HepG2 (cell line): ENCODE measurements at regions of chr7 and their contacts with region 1.

Region 1: GRCh38 chr7:22782616-22783232 is 39.9 kb downstream of the TOMM7 start:
- DNase-seq: peak; percentile 44
- ATAC-seq: peak; percentile 30
- H3K4me3 ChIP-seq: no peak overlapping the region
- H3K27ac ChIP-seq: no peak overlapping the region
- H3K4me1 ChIP-seq: peaks cover 55% of the 10 kb centered on the region
- H3K27me3 ChIP-seq: no peaks in the 10 kb centered on the region
- CTCF ChIP-seq: peak; percentile 68
- EP300 ChIP-seq: no peak
- POLR2A ChIP-seq: no peak
- RAD21 ChIP-seq: peak; percentile 50; the same call in 1 of the 2 replicates

Region 2: DNA sequence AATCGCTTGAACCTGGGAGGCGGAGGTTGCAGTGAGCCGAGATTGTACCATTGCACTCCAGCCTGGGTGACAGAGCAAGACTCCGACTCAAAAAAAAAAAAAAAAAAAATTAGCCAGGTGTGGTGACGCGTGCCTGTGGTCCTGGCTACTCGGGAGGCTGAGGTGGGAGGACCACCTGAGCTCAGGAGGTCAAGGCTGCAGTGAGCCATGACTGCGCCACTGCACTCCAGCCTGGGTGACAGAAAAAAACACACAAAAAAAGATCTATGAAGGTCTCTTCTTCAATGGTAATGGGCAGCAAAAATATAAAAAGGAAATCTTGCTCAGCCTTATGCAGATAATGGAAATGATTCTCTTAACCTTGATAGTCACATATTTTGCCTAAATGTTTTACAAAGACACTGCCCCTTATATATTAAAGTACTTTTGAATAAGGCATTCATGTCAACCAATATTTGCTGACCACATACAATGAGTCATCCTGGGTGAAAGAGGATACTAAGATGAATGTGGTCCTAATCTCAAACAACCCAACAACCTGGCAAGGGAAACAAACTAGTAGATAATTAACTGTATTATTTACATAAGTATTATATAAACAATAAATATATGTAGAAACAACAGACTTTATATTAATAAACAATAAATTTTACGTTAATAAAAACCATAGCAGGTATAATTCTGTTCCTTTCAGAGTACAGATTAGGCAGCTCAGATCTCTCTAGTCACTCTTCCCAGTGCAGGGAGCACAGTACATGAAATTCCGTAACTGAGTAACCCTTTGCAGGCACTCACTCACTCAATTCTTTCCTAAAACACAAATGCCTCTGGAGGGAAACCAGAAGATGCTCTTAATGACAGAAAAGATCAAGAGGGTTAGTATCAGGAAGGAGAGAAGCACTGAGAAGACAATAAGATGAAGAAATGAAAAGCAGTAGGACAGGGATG is 31.8 kb after region 1 on chr7:
- CTCF ChIA-PET with region 1: no interaction called
- POLR2A ChIA-PET with region 1: interaction called, 5 read pairs
- in situ Hi-C with region 1: no loop called
- intact Hi-C with region 1: loop called (anchors 2 kb)
- DNase-seq: peak; percentile 84
- ATAC-seq: peak; percentile 92
- H3K4me3 ChIP-seq: no peak overlapping the region
- H3K27ac ChIP-seq: peak overlapping the region; percentile 1
- H3K4me1 ChIP-seq: peaks cover 40% of the 10 kb centered on the region
- H3K27me3 ChIP-seq: no peaks in the 10 kb centered on the region
- CTCF ChIP-seq: no peak
- EP300 ChIP-seq: peak in 1 of 2 experiments; percentile 59; a peak in 1 of 4 replicates
- POLR2A ChIP-seq: no peak
- RAD21 ChIP-seq: no peak

Region 3: DNA sequence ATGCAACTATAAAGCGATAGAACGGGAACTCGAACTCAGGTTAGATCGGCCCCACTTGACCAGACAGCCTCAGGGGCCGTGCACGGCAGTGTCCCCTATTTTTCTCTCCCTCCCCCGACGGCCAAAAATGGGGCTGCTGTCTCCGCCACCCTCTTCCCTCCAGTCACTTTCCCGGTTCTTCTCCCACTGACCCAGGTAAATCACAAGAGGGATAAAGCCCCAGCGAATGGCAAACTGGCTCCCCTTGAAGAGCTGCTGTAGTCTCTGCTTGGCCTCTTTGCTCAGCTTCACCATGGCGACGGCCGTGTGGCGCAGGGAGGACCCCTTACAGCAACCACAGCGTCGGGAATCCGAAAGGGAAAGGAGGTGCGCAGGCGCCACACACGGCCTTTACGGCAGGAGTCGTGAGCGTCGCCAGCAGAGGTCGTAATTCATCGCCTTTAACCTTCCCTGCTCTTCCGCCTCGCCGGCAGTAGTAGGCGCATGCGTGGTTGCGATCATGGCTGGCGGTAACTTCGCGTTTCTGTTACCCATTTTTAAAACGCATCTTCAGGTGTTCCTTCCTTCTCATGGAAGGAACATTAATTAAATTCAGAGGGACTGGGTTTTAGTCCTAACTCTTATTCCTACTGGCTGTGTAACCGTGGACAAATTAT is 39.9 kb after region 1 on chr7 and contains the start of gene TOMM7:
- CTCF ChIA-PET with region 1: no interaction called
- POLR2A ChIA-PET with region 1: interaction called, 13 read pairs
- in situ Hi-C with region 1: no loop called
- intact Hi-C with region 1: loop called (anchors 1 kb)
- DNase-seq: peak; percentile 93
- ATAC-seq: peak; percentile 99
- H3K4me3 ChIP-seq: peak within 1 kb of the TSS; percentile 70 to 95 (median 90)
- H3K27ac ChIP-seq: peak within 1 kb of the TSS; percentile 77
- H3K4me1 ChIP-seq: peaks cover 37% of the 10 kb centered on the region
- H3K27me3 ChIP-seq: no peaks in the 10 kb centered on the region; a peak in 1 of 5 replicates
- CTCF ChIP-seq: peak; percentile 89
- EP300 ChIP-seq: 0 out of 4 replicates have a peak, but pooled peaks of 1 of the 2 experiments have one; percentile 21
- POLR2A ChIP-seq: peak; percentile 73 to 80
- RAD21 ChIP-seq: no peak
- total RNA-seq, gene TOMM7: 251 and 352 TPM in 2 replicates

Region 4: DNA sequence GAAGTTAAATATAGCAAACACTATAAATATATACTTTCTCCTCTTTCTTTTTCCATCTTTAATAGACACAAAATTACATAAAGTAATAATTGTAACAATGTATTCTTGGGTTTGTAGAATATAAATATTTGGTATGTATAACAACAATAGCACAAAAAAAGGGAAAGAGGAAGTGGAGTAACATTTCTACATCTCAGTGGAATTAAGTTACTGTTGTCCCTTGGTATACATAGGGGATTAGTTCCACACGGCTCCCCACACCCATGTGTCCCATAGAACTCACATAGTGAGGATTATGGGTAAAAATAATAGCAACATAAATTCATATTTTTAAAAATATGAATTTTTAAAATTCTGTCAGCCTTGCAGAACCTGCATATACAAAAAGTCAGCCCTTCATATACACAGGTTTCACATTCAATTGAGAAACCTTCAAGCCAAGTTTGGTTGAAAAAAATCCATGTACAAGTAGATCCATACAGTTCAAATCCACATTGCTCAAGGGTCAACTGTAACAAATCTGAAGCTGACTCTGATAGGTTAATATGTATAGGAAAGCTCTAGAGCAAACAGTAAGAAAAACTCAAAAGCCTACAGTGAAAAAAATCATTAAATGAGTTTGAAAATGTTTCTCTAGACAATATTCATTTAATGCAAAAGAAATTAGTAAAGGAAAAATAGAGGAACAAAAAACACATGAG is 138.8 kb after region 1 on chr7:
- CTCF ChIA-PET with region 1: no interaction called
- POLR2A ChIA-PET with region 1: no interaction called
- in situ Hi-C with region 1: no loop called
- intact Hi-C with region 1: no loop called
- DNase-seq: peak; percentile 23
- ATAC-seq: peak; percentile 91
- H3K4me3 ChIP-seq: no peak overlapping the region
- H3K27ac ChIP-seq: no peak overlapping the region
- H3K4me1 ChIP-seq: peaks cover 13% of the 10 kb centered on the region
- H3K27me3 ChIP-seq: no peaks in the 10 kb centered on the region
- CTCF ChIP-seq: no peak
- EP300 ChIP-seq: no peak
- POLR2A ChIP-seq: no peak
- RAD21 ChIP-seq: no peak